PC-3 (cell line): ENCODE measurements at regions of chr17 and their contacts with region 1.

Region 1: GRCh38 chr17:62761917-62762316 is 46.2 kb downstream of the MARCHF10 start:
- DNase-seq: peak; percentile 99
- ATAC-seq: peak; percentile 99
- H3K4me3 ChIP-seq: no peak overlapping the region
- H3K27ac ChIP-seq: peak overlapping the region; percentile 37
- H3K4me1 ChIP-seq: peaks cover 27% of the 10 kb centered on the region
- H3K27me3 ChIP-seq: no peaks in the 10 kb centered on the region
- CTCF ChIP-seq: no peak

Region 2: DNA sequence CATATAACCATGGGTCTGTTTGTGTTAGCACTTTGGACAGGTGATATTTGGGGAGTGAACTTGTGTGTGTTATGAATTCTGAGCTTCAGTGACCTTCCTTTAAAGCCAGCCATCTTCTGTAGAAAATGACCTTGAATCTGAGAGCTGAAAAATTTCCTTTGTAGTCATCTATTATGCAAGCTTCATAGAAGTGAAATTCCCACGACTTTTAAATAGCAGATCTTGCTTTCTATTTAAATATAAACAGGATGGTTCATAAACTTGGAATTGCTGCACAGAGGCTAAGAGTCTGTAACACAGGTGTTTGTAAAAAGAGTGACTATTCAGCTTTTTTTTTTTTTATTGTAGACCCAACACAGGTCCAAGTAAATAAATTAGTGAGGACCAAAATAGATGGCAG is 39.3 kb before region 1 on chr17:
- CTCF ChIA-PET with region 1: interaction called, 3 read pairs
- POLR2A ChIA-PET with region 1: interaction called, 40 read pairs
- intact Hi-C with region 1: no loop called
- DNase-seq: no peak
- ATAC-seq: no peak
- H3K4me3 ChIP-seq: no peak overlapping the region
- H3K27ac ChIP-seq: no peak overlapping the region
- H3K4me1 ChIP-seq: peaks cover 22% of the 10 kb centered on the region
- H3K27me3 ChIP-seq: no peaks in the 10 kb centered on the region
- CTCF ChIP-seq: no peak

Region 3: DNA sequence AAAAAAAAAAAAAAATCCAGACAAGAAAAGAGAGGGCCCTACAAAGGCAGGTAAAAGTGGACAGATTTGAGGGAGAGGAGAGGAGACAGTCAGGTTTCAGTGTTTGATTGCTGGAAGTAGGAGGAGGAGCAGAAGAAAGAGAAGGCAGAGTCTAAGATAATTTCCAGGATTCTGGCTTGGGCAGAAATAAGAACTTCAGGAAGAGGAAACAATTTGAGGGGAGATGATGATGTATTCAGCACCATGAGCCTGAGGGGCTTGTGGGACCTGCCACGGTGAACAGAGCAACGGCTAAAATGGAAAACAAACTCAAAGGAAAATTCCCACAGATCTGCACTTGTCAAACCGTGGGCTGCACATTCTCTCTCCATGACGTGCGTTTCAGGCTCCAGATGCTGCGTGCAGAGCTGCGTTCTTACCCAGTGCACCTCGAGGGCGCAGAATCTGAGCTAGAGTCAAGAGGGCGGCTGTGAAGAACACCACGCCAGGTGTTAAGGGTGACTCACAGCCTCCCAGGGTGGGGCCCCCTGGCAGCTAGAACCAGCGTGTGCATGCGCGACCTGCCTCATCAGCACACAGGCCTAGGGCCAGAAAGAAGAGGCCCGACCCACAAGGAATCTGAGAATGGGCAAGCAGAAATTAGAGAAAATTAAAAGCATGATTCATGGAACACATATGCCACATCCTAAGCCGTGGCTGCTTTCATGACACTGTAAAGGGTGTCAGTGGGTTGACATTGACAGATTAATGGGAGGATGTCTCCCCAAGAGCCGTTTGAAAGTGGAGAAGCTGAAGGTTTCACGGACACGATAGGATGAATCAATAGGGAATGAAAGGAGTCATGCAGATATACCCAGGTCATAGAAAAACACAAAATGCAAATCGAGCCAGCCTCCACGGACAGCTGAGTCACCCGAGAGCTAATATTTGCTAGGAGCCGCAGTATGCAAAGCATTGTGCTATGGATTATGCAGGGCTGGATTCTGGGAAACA is 17.1 kb after region 1 on chr17:
- CTCF ChIA-PET with region 1: interaction called, 5 read pairs
- POLR2A ChIA-PET with region 1: no interaction called
- intact Hi-C with region 1: loop called (anchors 1 kb)
- DNase-seq: peak; percentile 98
- ATAC-seq: peak; percentile 88
- H3K4me3 ChIP-seq: peak overlapping the region; percentile 39
- H3K27ac ChIP-seq: peak overlapping the region; percentile 92
- H3K4me1 ChIP-seq: peaks cover 47% of the 10 kb centered on the region
- H3K27me3 ChIP-seq: no peaks in the 10 kb centered on the region
- CTCF ChIP-seq: no peak

Region 4: GRCh38 chr17:62882878-62883277 is 121.0 kb after region 1 on chr17:
- CTCF ChIA-PET with region 1: no interaction called
- POLR2A ChIA-PET with region 1: interaction called, 24 read pairs
- intact Hi-C with region 1: no loop called
- DNase-seq: peak; percentile 14
- ATAC-seq: no peak
- H3K4me3 ChIP-seq: no peak overlapping the region
- H3K27ac ChIP-seq: no peak overlapping the region
- H3K4me1 ChIP-seq: peaks cover 4% of the 10 kb centered on the region
- H3K27me3 ChIP-seq: no peaks in the 10 kb centered on the region
- CTCF ChIP-seq: no peak